Gastrocnemius medialis (tissue), 4 donors: ENCODE measurements at regions of chr4 and their contacts with region 1.

Region 1: GRCh38 chr4:138938366-138938690 is 77.3 kb upstream of the NOCT start:
- DNase-seq: no peak
- ATAC-seq: no peak
- H3K4me3 ChIP-seq: no peak overlapping the region
- H3K27ac ChIP-seq: no peak overlapping the region
- H3K4me1 ChIP-seq: peaks cover 4 to 7% of the 10 kb centered on the region in 2 donors
- H3K27me3 ChIP-seq: no peaks in the 10 kb centered on the region
- CTCF ChIP-seq: peak; percentile 22 to 57 (median 45)
- POLR2A ChIP-seq: no peak

Region 2: DNA sequence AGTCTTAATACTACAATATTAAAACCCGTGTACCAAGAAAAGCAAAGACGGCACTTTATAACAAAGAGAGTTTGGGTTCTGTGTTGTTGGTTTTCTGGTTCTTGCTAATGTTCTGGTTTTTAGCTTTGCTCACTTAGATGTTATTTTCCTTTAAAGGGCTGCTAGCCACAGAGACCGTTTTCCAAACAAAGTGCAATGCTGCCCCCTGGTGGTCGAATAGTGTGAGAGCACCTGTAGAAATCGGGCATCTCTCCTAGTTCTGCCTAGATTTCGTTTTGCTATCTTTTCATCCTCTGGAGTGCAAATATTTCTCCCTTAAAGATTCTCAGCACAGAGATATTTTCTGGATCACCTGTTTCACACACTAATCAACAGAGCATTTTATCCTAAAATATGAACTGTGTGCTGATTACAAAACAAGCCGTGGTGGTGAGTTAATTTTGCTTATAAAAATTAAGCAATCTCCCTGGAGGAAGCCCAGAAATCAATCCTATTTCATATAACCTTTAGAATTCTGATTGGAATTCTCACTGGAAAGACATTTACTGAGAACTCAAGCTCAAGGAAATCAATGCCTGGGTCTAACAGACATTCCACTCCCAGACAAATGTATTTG is 257.2 kb before region 1 on chr4:
- in situ Hi-C with region 1: no loop called
- intact Hi-C with region 1: loop called (anchors 5 kb)
- DNase-seq: peak; percentile 50 to 53
- ATAC-seq: peak; percentile 67 to 70
- H3K4me3 ChIP-seq: no peak overlapping the region
- H3K27ac ChIP-seq: no peak overlapping the region
- H3K4me1 ChIP-seq: peaks cover 3 to 20% of the 10 kb centered on the region in 2 donors
- H3K27me3 ChIP-seq: no peaks in the 10 kb centered on the region
- CTCF ChIP-seq: peak; percentile 76 to 93 (median 84)
- POLR2A ChIP-seq: no peak

Region 3: DNA sequence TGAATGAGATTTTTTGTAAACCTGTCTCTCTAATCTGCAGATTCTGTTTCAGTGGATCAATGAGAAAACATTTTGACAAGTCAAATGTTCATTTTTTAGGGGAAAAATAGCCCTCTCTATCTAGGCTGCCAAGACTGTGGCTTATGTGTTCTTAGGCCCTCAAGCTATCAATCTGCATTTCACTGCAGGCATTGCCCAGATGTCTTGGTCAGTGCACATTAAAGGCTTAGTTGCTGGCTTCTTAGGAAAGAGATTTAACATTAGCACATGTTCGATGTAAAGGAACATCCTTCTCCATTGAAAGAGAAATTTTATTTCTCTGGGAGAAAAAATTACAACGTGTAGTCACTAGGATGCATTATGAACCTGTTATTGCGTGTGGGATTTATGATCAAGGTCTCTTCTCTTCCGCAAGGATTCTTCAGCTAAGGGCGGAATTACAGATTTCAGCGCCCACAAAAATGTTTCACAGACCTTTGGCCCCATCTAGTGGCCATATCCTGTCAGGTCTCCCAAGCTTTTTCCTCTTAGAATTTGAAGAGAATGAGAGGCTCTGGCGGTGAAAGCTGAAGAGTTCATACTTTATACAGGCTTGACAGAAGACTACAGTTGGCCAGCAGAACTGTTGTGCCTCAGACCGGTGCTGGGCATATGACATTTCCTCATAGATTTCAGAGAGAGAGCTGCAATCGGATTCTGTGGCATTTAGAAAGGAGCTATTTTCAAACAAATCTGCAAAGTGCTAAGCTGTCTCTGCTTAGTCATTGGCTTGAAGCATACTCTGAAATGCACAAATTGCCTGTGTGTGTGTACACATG is 67.4 kb before region 1 on chr4:
- in situ Hi-C with region 1: no loop called
- intact Hi-C with region 1: loop called (anchors 1 kb)
- DNase-seq: peak; percentile 11 to 36
- ATAC-seq: peak; percentile 74 to 84
- H3K4me3 ChIP-seq: no peak overlapping the region
- H3K27ac ChIP-seq: no peak overlapping the region
- H3K4me1 ChIP-seq: peaks cover 3 to 6% of the 10 kb centered on the region in 2 donors
- H3K27me3 ChIP-seq: no peaks in the 10 kb centered on the region
- CTCF ChIP-seq: peak; percentile 74 to 87 (median 83)
- POLR2A ChIP-seq: no peak

Region 4: GRCh38 chr4:138897811-138898226 is 40.5 kb before region 1 on chr4:
- in situ Hi-C with region 1: no loop called
- intact Hi-C with region 1: no loop called
- DNase-seq: peak in 1 of 2 donors; percentile 5
- ATAC-seq: peak; percentile 97 to 99
- H3K4me3 ChIP-seq: peak overlapping the region in 2 of 4 donors; percentile 3 to 21
- H3K27ac ChIP-seq: peak overlapping the region; percentile 69 to 85 (median 76)
- H3K4me1 ChIP-seq: peaks cover 12 to 19% of the 10 kb centered on the region in 2 donors
- H3K27me3 ChIP-seq: no peaks in the 10 kb centered on the region
- CTCF ChIP-seq: no peak
- POLR2A ChIP-seq: no peak

Region 5: DNA sequence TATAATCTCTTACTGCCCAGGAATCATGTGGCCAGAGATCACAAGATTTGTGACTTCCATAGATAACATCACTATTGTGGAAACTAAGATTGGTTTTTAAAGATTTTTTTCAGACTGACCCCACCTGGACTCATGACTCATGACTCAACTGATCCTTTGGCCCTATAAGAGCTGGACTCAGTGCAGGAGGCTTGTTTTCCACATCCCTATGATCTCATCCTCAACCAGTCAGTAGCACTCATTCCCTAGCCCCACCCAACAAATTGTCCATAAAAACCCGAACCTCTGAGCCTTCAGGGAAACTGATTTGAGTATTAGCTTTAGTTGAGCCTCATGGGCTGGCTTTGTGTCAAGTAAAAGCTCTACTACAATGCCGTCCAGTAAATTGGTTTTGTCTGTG is 69.3 kb after region 1 on chr4:
- in situ Hi-C with region 1: no loop called
- intact Hi-C with region 1: no loop called
- DNase-seq: no peak
- ATAC-seq: no peak
- H3K4me3 ChIP-seq: no peak overlapping the region
- H3K27ac ChIP-seq: no peak overlapping the region
- H3K4me1 ChIP-seq: no peaks in the 10 kb centered on the region
- H3K27me3 ChIP-seq: no peaks in the 10 kb centered on the region
- CTCF ChIP-seq: no peak
- POLR2A ChIP-seq: no peak